ENCODE measurements at regions of chr17 and their contacts with region 1.

Region 1: DNA sequence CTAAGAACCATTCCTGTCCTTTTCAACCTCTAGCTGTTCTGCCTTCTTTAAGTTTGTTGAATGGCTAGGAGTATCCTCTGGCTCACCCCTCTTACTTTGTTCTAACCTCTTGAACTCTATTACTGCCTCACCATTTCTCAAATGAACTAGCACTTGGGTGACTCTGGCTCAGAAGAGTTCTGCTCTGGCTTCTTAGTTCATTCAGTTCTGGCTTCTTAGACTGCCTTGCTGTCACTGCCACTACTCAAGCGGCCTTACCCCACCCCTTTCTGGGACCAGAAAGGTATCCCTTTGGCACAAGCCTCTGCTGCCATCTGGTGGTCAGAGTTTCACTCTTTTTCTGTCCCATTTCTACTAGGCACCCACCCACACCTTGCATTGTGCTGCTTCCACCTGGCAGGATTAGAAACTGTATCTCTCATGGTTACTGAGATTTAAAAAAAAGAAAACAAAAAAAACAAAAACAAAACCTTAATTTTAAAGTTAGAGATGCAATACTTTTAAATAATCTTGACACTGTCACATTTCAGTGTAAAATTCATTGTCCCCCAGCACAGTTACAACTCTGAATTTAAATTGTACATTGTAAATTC is 6.8 kb upstream of the ABCA10 start:
- DNase-seq: peak; percentile 52 to 96 (median 84)

Region 2: DNA sequence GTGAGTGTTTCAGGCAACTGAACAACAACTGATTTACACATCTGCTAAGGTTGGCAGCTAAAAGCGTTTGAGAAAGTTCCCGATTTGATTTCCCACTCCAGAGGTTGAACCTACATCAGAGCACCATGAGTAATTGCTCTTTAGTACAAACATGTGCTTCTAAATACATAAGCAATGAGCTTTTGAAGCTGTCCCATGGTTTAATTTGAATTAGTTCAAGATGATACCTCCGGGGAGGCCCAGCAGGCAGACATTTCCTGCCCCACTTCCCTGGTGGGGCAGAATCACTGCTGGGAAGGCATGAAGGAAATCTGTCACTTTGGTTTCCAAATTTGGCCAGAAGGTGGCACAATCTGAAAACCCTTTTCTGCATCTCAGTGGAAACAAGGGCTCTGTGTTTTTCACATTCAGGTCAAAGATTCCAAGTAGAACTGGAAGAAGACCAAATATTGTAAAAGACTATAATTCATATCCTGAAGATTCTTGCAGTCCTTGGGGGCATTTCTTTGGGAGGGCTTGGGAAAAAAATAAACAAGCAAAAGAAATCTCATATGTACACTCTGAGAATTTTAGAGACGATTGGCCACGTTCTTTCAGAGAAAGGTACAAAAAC is 458.1 kb before region 1 on chr17:
- intact Hi-C with region 1: loop called (anchors 5 kb)
- DNase-seq: peak in 37 of 42 donors; percentile 21 to 91 (median 70)

Region 3: DNA sequence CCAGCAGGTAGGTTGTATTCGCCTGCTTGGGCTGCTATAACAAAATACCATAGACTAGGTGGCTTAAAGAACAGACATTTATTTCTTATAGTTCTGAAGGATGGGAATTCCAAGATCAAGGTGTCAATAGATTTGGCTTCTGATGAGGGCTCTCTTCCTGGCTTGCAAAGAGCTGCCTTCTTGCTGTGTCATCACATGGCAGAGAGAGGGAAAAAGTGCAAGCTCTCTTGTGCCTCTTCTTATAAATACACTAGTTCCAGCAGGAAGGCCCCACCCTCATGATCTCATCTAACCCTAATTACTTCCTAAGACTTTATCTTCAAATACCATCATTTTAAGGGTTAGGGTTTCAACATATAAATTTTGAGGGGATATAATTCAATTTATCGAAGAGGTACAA is 205.3 kb before region 1 on chr17:
- intact Hi-C with region 1: no loop called
- DNase-seq: no peak

Region 4: GRCh38 chr17:69047368-69048263 is 187.8 kb before region 1 on chr17:
- intact Hi-C with region 1: no loop called
- DNase-seq: no peak

Region 5: DNA sequence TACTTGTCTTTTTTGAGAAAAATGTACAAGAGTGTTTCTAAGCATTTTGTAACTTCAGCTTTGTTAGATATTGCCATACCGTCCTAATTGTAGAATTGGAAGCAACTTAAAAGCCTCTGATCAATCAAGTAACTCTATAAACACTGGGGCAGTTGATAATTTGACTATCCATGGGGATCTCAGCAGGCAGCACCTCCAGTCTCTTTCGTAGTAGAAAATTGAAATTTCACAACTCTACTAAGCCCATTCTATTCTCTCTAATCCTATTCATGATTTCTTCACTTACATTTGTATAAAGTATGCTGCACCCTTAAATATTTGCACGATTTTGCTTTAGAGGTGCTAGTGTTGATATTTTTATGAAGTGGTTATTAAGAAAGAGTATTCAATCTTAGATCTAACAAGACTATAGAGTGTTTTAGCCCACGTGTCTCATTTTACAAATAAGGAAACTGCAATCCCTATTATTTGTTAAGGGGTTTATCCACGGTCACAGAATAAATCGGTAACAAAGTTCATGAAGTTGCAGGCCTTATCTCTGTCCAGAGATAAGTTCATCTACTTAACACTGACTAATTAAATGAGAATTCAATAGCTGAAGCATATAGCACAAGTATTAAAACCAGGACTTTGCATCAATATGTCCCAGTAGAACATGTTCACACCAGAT is 104.7 kb before region 1 on chr17:
- intact Hi-C with region 1: no loop called
- DNase-seq: no peak

Region 6: DNA sequence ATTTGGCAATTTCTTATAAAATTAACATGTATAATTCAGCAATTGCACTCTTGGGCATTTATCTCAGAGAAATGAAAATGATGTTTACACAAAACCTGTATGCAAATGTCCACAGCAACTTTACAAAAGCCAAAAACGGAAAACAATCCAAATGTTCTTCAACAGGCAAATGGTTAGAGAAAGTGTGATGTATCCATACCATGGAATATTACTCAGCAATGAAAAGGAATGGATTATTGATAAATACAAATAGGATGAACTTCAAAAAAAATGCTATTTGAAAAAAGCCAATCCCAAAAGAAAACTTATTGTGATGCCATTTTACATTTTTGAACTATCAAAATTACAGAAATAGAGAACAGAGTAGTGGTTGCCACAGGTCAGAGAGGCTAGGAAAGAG is 30.4 kb after region 1 on chr17:
- intact Hi-C with region 1: no loop called
- DNase-seq: no peak

Measured in head of caudate nucleus (tissue), 42 donors.